Activated CD4-positive, alpha-beta T cell treated with anti-CD3 and anti-CD28 coated beads for 36 hours (primary cell): ENCODE measurements at regions of chr3 and their contacts with region 1.

Region 1: DNA sequence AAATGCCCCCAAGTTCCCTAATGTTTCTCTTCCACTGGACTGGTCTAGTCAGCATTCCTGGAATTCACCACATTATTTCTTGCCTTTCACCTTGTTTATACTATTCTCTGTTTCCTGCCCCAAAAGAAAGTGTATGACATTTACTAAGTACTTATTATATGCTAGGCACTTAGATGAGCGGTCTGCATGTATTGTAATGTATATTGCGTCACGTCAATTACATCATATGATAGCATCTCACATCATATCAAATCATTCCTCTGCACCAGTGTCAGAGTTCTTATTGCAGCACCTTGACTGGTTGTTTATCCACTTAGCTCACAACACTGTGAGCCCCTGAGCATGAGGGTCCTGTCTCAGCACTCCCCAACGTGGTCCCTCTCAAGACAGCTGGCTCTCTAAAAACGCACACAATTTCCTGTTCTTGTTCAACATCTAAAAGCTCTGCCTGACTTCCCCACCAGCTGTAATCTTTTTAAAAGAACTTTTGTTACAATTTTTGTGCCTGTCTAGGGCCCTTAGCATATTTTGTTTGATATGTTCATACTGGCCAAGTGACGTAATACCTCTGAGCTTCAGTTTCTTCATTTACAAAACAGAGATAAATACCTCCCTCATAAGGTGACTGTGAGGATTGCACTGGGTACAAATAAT is 58.8 kb downstream of the ARHGAP31 start:
- DNase-seq: no peak
- ATAC-seq: peak; percentile 63
- H3K4me3 Mint-ChIP-seq: no peak overlapping the region
- H3K27ac Mint-ChIP-seq: peak overlapping the region; percentile 32
- H3K4me1 Mint-ChIP-seq: peaks cover 34% of the 10 kb centered on the region
- H3K27me3 Mint-ChIP-seq: no peaks in the 10 kb centered on the region

Region 2: GRCh38 chr3:118485693-118486092 is 867.3 kb before region 1 on chr3:
- CTCF ChIA-PET with region 1: no interaction called
- POLR2A ChIA-PET with region 1: no interaction called
- intact Hi-C with region 1: no loop called
- DNase-seq: no peak
- ATAC-seq: no peak
- H3K4me3 Mint-ChIP-seq: no peak overlapping the region
- H3K27ac Mint-ChIP-seq: no peak overlapping the region
- H3K4me1 Mint-ChIP-seq: no peaks in the 10 kb centered on the region
- H3K27me3 Mint-ChIP-seq: no peaks in the 10 kb centered on the region

Region 3: DNA sequence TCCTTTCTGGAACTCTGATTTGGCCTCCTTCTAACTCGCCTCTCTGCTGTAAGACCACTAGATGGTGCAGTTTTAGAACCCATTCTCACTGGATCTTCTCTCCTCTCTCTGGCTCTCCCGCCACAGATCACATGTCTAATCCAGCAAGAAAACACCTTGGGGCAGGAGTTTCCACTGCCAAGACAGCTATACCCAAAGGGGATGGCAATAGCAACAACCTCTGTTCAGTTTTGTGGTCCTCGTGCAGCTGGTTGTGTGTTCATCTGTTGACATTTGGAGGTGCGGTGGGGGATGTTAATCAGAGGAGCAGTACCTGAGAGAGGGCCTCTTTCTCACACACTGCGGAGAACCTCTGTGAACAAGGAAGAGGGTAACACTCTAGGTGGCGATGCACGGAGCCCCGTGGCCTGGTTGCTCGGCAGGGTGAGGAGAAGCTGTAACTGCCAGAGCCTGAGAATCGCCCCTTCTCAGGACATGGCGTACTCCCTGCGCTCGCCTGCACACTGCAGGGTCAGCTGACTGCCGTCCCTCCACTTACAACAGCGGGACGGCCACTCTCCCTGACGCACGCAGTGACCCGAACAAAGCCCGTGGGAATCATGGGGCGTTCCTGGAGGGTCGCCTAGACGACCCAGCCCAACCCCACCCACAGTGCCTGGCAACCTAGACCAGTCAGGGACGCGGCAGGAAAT is 207.3 kb before region 1 on chr3 and contains the start of gene TEX55:
- CTCF ChIA-PET with region 1: interaction called, 6 read pairs
- POLR2A ChIA-PET with region 1: no interaction called
- intact Hi-C with region 1: loop called (anchors 2 kb)
- DNase-seq: peak; percentile 26
- ATAC-seq: peak; percentile 81
- H3K4me3 Mint-ChIP-seq: no peak within 1 kb of the TSS
- H3K27ac Mint-ChIP-seq: peak within 1 kb of the TSS; percentile 23
- H3K4me1 Mint-ChIP-seq: peaks cover 4% of the 10 kb centered on the region
- H3K27me3 Mint-ChIP-seq: no peaks in the 10 kb centered on the region
- total RNA-seq, gene TEX55: not detected